ENCODE measurements at regions of chr12 and their contacts with region 1.

Region 1: GRCh38 chr12:14937689-14938088 is 648 bp downstream of the ERP27 start:
- DNase-seq: no peak
- ATAC-seq: peak; percentile 81
- H3K4me3 ChIP-seq: no peak overlapping the region
- H3K27ac ChIP-seq: no peak overlapping the region
- H3K4me1 ChIP-seq: peaks cover 12% of the 10 kb centered on the region; the same call in 1 of the 2 replicates
- H3K27me3 ChIP-seq: no peaks in the 10 kb centered on the region
- CTCF ChIP-seq: no peak
- EP300 ChIP-seq: no peak
- POLR2A ChIP-seq: no peak
- RAD21 ChIP-seq: no peak

Region 2: GRCh38 chr12:14901228-14901562 is 36.5 kb before region 1 on chr12:
- CTCF ChIA-PET with region 1: no interaction called
- POLR2A ChIA-PET with region 1: no interaction called
- in situ Hi-C with region 1: no loop called
- intact Hi-C with region 1: no loop called
- DNase-seq: no peak
- ATAC-seq: 0 out of 3 replicates have a peak, but pooled peaks have one; percentile 31
- H3K4me3 ChIP-seq: no peak overlapping the region
- H3K27ac ChIP-seq: no peak overlapping the region
- H3K4me1 ChIP-seq: no peaks in the 10 kb centered on the region
- H3K27me3 ChIP-seq: no peaks in the 10 kb centered on the region
- CTCF ChIP-seq: no peak
- EP300 ChIP-seq: no peak
- POLR2A ChIP-seq: no peak
- RAD21 ChIP-seq: no peak

Region 3: DNA sequence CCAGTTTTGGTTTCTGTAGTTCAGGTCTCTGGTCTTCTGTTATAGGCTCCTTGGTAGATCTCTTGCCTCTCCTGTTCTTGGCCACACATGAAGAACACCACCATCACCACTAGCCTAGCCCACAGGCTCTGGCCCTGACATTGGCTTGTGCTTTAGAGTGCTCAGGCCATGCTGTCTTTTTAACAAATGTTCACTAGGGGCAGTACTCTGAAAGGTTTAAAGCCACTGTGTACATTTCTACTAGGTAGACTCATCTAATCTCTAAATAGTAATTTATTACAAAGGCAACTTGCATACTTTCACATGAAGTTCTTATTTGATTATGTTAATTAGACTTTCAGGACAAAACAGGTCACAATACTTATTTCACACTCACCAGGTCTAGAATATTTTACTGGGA is 73.5 kb after region 1 on chr12:
- CTCF ChIA-PET with region 1: no interaction called
- POLR2A ChIA-PET with region 1: no interaction called
- in situ Hi-C with region 1: no loop called
- intact Hi-C with region 1: no loop called
- DNase-seq: no peak
- ATAC-seq: peak; percentile 90
- H3K4me3 ChIP-seq: no peak overlapping the region
- H3K27ac ChIP-seq: no peak overlapping the region
- H3K4me1 ChIP-seq: no peaks in the 10 kb centered on the region
- H3K27me3 ChIP-seq: no peaks in the 10 kb centered on the region
- CTCF ChIP-seq: no peak
- EP300 ChIP-seq: no peak
- POLR2A ChIP-seq: no peak
- RAD21 ChIP-seq: no peak

Region 4: DNA sequence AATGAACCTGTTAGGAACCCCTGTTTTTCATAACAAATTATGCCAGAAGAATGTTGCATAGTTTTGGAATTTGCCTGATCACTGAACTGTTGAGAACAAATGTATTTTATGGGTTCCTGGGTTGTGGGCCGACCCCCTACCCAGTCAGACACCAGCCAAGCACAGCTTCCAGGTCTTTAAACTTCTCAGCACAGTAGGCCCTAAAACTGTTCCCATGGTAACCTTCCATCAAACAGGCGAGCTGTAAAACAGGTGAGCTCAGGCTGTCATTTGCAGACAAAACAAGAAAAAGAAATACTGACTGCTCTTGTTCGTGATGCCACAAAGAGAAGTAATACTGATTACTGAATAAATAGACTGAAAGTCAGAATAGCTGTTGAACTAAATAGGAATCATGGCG is 531.7 kb after region 1 on chr12:
- CTCF ChIA-PET with region 1: no interaction called
- POLR2A ChIA-PET with region 1: no interaction called
- in situ Hi-C with region 1: no loop called
- intact Hi-C with region 1: loop called (anchors 5 kb)
- DNase-seq: no peak
- ATAC-seq: no peak
- H3K4me3 ChIP-seq: no peak overlapping the region
- H3K27ac ChIP-seq: no peak overlapping the region
- H3K4me1 ChIP-seq: no peaks in the 10 kb centered on the region
- H3K27me3 ChIP-seq: no peaks in the 10 kb centered on the region
- CTCF ChIP-seq: no peak
- EP300 ChIP-seq: no peak
- POLR2A ChIP-seq: no peak
- RAD21 ChIP-seq: no peak